Activated T-helper 1 cell treated with anti-CD3 and anti-CD28 coated beads, Interleukin-12 subunit alpha, Interleukin-12 subunit beta, Interleukin-2, Interleukin-4 antibody, amounts not matched to agents 30 ng/mL and 10 ng/mL and 1 ng/mL, durations not matched to agents 14 hours and 24 hours and 36 hours (primary cell): ENCODE measurements at regions of chr16 and their contacts with region 1.

Region 1: DNA sequence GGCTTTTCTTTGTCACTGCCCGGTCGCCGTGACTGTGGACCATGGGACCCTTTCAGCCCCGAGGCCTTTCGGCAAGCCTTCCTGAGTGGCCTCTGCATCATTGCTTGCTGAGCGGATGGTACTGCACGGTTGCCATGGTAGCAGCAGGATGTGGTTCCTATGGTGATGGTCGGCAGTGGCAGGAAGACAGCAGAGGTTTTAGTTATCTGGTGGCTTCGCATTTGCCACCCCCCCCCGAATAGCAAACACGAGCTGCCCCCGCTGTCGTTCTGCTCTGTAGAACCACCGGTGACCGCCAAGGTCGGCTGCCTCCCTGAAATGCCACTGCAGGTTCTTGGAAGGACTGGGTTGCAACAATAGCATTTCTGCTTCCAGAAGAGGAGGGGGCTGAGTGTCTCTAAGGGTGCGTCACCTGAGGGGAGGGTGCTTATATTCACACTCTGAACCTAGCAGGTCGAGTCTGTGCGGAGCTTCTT is 76.6 kb downstream of the CMIP start:
- DNase-seq: peak; percentile 81
- H3K4me3 Mint-ChIP-seq: peak overlapping the region; percentile 4
- H3K27ac Mint-ChIP-seq: peak overlapping the region; percentile 79
- H3K4me1 Mint-ChIP-seq: peaks cover 60% of the 10 kb centered on the region
- H3K27me3 Mint-ChIP-seq: no peaks in the 10 kb centered on the region

Region 2: DNA sequence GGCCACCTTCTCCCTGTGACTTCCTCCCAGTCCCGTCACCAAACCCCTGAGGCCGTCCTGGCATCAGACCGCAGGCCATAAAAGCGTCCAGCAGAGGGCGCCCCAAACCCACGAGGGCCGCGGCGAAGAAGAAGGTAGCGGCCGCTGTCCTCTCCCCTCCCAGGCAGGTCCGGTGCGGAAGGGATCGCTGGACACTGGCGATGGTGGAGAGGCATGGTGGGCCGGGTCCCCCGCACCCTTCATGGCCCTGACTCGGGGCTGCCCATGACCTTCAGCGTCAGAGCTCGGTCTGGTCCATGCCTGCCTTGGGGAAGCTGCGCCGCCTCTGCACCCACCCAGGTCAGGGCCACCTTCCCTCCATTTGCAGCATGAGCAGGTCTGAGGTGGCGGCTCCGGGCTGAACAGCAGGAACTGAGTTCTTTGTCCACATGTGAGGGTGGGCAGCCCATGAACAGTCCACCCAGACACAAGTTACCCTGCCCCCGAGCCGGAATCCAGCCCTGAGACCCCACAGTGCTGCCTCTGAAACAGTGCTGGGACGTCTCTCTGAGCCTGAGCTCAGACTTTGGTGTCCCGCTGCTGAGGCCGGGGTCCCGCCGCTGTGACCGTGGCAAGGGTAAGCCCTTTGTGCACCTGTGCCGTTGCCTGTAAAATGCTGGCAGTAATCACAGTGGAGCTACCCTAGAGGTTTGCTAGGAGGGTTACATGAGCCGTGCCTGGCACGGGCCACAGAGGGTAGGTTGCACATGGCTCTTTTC is 117.4 kb before region 1 on chr16:
- intact Hi-C with region 1: no loop called
- DNase-seq: peak; percentile 65
- H3K4me3 Mint-ChIP-seq: no peak overlapping the region
- H3K27ac Mint-ChIP-seq: no peak overlapping the region
- H3K4me1 Mint-ChIP-seq: no peaks in the 10 kb centered on the region
- H3K27me3 Mint-ChIP-seq: peaks cover 4% of the 10 kb centered on the region

Region 3: GRCh38 chr16:81444448-81445121 is 76.6 kb before region 1 on chr16 and contains the start of gene CMIP:
- intact Hi-C with region 1: loop called (anchors 5 kb)
- DNase-seq: peak; percentile 78
- H3K4me3 Mint-ChIP-seq: peak within 1 kb of the TSS; percentile 88
- H3K27ac Mint-ChIP-seq: peak within 1 kb of the TSS; percentile 93
- H3K4me1 Mint-ChIP-seq: peaks cover 48% of the 10 kb centered on the region
- H3K27me3 Mint-ChIP-seq: peaks cover 28% of the 10 kb centered on the region
- total RNA-seq, gene CMIP: 45.4 and 45.8 TPM in 2 replicates

Region 4: GRCh38 chr16:81457326-81458133 is 63.7 kb before region 1 on chr16:
- intact Hi-C with region 1: no loop called
- DNase-seq: no peak
- H3K4me3 Mint-ChIP-seq: no peak overlapping the region
- H3K27ac Mint-ChIP-seq: no peak overlapping the region
- H3K4me1 Mint-ChIP-seq: peaks cover 32% of the 10 kb centered on the region
- H3K27me3 Mint-ChIP-seq: no peaks in the 10 kb centered on the region

Region 5: GRCh38 chr16:81469710-81470535 is 51.3 kb before region 1 on chr16:
- intact Hi-C with region 1: loop called (anchors 2 kb)
- DNase-seq: peak; percentile 32
- H3K4me3 Mint-ChIP-seq: peak overlapping the region; percentile 59
- H3K27ac Mint-ChIP-seq: peak overlapping the region; percentile 84
- H3K4me1 Mint-ChIP-seq: peaks cover 60% of the 10 kb centered on the region
- H3K27me3 Mint-ChIP-seq: no peaks in the 10 kb centered on the region

Region 6: DNA sequence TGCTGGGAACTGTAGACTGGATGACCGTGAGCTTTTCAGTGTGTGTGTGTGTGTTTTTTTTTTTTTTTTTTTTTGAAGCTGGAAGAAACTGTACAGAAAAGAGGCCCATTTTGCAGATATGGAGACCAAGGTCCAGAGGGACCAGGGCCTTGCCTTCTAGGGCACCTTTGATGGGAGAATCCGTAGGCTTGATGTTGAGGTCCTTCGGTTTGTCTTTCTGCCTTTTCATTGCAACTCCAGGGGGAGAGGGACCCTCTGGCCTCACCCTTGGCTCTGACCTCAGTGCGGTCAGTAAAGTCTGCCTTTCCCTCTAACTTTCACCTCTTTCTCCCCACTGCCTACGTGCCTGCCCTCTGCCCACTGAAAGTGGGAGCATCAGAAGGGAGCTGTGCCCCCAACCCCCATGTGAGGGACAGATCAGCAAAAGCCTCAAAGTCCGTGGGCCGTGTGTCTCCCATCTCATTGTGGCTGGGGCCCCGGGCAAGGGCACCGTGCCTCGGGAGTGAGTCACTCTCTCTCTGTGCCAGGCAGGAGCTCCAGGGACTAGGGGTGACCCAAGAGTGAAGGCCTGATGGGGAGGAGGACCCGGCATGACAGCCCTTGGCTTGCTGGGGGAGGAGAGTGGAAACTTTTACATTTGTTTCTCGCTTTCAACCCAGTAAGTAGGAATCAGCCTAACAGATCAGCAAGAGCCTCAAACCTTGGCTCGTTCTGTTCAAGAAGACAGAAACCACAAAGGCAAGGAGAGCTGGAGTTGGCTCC is 47.0 kb after region 1 on chr16:
- intact Hi-C with region 1: loop called (anchors 1 kb)
- DNase-seq: no peak
- H3K4me3 Mint-ChIP-seq: peak overlapping the region; percentile 27
- H3K27ac Mint-ChIP-seq: peak overlapping the region; percentile 81
- H3K4me1 Mint-ChIP-seq: peaks cover 20% of the 10 kb centered on the region
- H3K27me3 Mint-ChIP-seq: no peaks in the 10 kb centered on the region

Region 7: GRCh38 chr16:81600901-81601428 is 79.8 kb after region 1 on chr16:
- intact Hi-C with region 1: no loop called
- DNase-seq: no peak
- H3K4me3 Mint-ChIP-seq: no peak overlapping the region
- H3K27ac Mint-ChIP-seq: no peak overlapping the region
- H3K4me1 Mint-ChIP-seq: peaks cover 23% of the 10 kb centered on the region
- H3K27me3 Mint-ChIP-seq: no peaks in the 10 kb centered on the region

Region 8: DNA sequence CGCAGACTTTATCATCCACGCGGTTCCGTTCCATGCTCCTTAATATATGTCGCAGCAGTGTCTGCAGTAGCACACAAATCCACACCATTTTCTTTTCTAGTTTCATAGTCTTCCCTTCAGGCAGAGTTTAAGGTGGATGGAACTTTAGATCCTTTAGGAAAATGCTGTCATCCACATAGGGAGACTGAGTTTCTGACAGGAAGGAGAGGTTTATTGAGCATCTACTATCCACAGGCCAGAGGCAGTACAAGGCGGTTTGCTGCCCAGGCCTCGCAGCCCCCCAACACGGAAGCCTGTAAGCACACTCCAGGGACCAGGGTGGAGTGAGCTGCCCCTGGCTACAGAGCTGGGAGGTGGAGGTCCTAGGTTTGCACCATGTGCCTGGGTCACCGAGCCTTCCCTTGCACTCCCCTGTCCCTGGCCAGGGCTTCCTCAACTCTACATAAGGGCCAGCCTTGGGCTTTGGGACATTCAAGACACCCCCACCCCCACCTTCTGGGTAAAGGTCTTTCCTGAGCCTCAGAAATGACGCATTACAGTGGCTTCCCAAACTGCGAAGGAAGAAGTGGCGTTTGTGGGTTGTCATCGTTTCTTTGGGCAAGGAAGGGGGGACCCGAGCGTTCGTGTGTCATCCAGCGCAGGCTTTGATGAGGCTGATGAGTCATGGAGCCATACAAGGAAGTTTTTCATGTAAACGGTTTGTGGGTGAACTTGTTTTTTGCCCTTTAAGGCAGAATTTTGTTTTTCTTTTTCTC is 111.4 kb after region 1 on chr16:
- intact Hi-C with region 1: loop called (anchors 5 kb)
- DNase-seq: peak; percentile 76
- H3K4me3 Mint-ChIP-seq: peak overlapping the region; percentile 80
- H3K27ac Mint-ChIP-seq: peak overlapping the region; percentile 98
- H3K4me1 Mint-ChIP-seq: peaks cover 67% of the 10 kb centered on the region
- H3K27me3 Mint-ChIP-seq: no peaks in the 10 kb centered on the region